ENCODE measurements at regions of chr1 and their contacts with region 1.

Region 1: DNA sequence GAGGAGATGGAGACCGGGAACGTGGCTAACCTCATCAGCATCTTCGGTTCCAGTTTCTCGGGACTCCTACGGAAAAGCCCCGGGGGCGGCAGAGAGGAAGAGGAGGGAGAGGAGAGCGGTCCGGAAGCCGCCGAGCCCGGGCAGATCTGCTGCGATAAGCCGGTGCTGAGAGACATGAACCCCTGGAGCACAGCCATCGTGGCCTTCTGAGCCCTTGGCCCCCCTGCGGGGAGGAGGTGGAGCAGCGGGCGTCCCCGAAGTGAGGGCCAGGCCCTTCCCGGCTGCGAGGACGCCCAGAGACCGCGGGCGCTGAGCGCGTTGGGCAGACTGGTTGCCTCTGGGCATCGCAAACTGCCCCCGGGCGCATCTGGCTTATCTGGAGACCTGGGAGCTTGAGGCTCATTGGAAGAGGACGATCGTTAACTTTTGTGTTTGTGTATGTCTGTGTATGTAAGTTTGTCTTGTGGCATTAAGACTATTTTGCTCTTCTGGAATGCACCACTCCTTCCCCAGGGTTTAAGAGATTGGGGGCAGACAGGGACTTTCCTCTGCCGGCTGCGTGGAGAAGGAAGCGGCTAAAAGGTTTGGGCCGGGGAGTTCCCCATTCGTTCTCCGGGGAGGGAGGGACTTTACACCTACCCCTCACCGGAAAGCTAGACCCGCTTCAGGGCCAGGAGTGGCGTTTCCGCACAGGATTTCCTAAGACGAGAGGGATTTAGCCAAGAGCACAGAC is 1.3 kb downstream of the IER5 start:
- DNase-seq: peak; percentile 64 to 84
- H3K4me3 ChIP-seq: peak overlapping the region; percentile 69 to 94 (median 75)
- H3K27ac ChIP-seq: peak overlapping the region; percentile 87 to 97 (median 92)
- H3K4me1 ChIP-seq: peaks cover 6 to 52% (median 45%) of the 10 kb centered on the region in 4 donors
- H3K27me3 ChIP-seq: no peaks in the 10 kb centered on the region
- CTCF ChIP-seq: no peak
- EP300 ChIP-seq: no peak
- POLR2A ChIP-seq: no peak

Region 2: DNA sequence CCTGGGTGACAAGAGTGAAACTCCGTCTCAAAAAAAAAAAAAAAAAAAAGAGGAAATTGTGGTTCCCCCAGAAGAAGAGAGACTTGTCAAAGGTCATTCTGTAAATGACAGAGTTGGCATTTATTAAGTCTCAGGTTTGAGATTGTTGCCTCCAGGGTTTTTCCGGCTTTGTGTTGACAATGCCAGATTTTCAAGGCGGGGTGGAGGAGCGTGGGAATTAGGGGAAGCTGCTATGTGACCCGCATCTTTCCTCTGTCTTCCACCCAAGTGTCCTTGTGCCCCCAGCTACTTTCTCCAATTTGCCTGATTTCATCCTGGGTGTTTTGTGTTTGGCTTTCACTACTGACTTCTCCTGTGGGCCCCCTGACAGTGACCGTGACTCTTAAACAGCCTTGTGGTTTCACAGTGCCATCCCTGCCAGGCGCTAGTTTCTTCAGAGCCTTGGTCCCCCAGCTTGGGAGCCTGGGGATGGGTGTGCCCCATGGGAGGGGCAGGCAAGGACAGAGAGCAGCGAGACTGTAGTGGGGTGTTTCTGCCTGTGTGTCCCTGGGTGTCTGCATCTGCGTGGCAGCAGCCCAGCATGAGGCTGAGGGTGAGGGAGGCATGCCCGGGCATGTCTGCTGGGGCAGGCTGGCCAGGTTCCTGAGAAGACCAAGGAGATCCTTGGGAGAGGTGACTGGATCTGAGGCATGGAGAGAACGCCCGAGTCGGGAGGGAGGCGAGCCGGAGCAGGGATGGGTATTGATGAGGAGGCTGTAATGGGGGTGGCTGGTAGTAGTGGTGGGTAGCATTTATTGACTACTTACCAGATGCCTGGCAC is 44.9 kb after region 1 on chr1:
- intact Hi-C with region 1: loop called (anchors 5 kb)
- DNase-seq: peak; percentile 42 to 67
- H3K4me3 ChIP-seq: no peak overlapping the region
- H3K27ac ChIP-seq: peak overlapping the region in 4 of 5 donors; percentile 22 to 47 (median 27)
- H3K4me1 ChIP-seq: peaks cover 10 to 39% (median 18%) of the 10 kb centered on the region in 4 donors
- H3K27me3 ChIP-seq: no peaks in the 10 kb centered on the region
- CTCF ChIP-seq: no peak
- EP300 ChIP-seq: no peak
- POLR2A ChIP-seq: no peak